HEK293T (cell line): ENCODE measurements at regions of chr15 and their contacts with region 1.

Region 1: DNA sequence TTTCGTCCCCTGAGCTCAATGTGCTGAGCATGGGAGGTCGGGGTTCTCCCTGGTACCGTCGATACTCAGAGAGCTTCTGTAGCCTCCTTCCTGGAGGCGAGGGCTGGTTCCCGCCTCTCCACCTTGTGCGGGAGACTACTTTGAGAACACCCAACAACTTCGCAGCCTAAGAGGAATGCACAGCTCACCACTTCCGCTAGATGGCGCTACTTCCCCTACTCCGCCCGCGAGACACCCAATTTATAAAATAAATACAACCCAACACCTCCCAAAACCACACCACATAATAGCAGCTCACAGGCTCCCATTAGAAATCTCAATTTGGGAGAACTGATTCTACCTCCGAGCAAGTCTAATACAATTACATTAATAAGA is 1.2 kb downstream of the RGMA start:
- DNase-seq: peak; percentile 81

Region 2: DNA sequence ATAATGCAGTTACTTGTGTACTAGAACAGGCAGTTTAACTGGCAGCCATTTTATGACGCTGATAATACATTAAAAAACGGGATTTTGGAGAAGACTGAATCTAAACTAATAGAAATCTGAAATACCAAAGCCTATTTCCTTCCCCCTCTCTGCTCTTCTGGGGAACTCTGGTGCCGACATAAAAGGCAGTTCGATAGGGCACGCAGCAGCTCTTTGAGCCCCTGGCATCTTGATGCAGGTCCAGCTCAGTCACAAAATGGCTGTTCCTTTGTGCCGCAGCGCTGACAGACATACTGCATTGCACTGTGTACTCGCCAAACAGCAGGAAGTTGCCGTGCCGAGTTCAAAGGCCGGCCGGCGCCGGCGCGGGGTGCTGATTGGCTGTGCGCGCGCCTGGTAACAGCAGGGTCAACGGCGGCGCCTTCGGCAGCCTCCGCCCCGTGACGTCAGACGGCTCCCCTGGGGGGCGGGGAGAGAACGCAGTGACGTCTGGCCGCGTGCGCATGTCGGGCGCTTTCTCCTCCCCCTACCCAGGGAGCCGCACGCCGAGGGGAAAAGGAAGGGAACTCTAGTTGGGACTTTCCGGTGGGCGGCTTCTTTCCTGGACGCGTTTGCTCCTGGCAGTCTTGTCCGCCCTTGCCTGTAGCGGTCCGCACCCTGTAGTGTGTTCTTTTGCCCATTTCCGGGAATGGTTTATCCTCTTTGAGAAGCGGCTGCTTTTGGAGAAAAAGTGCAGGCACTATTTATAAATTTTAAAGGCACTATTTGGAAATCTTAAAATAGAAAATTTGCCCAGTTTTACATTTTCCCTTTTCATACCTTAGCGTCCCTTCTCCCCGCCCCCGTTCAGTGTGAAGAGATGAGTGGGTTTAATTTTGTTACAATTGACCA is 183.6 kb before region 1 on chr15:
- CTCF ChIA-PET with region 1: no interaction called
- POLR2A ChIA-PET with region 1: no interaction called
- DNase-seq: peak; percentile 92

Region 3: GRCh38 chr15:93030430-93031105 is 57.2 kb before region 1 on chr15:
- CTCF ChIA-PET with region 1: interaction called, 11 read pairs
- POLR2A ChIA-PET with region 1: no interaction called
- DNase-seq: peak; percentile 85

Region 4: GRCh38 chr15:93063262-93063671 is 24.5 kb before region 1 on chr15:
- CTCF ChIA-PET with region 1: interaction called, 13 read pairs
- POLR2A ChIA-PET with region 1: no interaction called
- DNase-seq: no peak

Region 5: DNA sequence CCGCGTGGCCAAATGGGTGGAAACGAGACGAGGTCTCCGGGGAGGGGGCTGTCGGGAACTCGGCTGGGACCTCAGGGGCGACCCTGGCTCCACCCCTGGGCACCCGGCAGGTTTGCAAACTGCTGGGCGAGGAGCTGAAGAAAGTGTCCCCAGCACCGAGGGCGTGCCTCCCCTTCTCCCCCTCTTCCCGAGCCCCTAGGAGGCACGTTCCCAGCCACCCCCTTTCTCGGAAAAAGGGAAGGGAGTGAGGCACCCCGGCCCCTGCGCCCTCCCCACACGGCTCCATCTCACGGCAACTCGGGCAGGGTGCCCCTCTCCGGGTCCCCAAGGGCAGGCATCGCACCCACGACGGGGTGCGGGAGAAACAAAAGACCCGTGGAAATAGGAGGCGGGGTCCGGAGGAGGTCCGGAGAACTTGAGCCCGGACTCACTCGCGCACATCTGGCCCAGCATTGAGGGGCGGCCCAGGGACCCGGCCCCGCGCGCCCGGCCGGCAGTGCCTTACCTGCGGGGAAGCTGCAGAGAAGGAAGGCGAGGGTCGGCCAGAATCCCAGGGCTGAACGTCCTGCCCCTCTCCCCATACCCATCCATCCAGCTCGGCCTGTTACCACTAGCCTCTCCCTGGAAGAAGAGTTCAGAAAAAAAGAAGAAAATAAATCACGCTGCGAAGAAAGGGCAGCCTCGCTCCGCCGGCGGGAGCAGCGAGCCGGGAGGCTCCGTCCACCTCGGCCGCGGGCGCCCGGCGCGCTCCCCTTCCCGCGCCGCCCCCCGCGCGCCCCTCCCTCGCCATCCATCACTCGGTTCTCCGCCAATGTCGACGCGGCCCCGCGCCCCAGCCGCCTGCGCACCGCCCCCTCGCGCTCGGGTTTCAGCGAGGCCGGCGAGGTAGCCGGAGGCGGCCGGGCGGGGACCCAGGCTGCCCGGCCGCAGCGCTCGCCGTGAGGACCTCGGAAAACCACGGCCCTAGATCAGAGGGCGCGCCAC is 15.1 kb before region 1 on chr15:
- CTCF ChIA-PET with region 1: interaction called, 44 read pairs
- POLR2A ChIA-PET with region 1: interaction called, 12 read pairs
- DNase-seq: peak; percentile 87

Region 6: DNA sequence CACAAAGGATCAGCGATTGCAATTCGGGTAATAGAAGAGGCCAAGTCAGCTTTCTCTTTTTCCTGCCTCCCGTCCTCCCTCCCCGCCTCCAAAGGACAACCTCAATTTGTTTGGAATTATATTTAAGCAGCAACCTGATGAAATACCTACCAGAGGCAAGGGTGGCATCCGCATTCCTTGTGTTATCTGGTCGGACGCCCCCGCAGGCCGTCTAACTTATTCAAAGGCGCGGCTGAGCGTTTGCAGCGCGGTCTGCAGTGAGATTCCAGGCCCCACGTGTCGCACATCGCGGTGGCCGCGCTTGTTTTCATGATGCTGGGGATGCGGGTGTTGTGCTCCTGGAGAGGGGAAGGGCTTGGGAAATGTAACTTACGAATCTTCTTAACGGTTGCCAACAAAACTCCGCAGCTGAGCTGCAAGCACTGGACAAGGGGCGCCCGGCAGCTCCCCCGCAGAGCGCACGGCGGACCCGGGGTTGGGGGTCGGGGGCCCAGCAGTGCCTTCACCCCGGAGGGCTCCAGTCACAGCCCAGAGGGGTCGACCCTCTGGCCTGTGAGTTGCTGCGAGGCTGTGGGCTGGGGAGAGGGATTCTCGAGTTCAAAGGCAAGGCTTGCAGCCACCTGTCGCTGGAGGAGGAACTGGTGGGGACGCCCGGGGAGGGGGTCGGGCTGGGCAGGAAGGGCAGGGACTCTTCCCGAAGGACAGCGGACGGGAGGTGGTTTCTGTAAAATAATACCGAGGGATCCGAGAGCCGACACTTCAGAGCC is 21.7 kb after region 1 on chr15:
- CTCF ChIA-PET with region 1: no interaction called
- POLR2A ChIA-PET with region 1: no interaction called
- DNase-seq: no peak

Region 7: GRCh38 chr15:93126599-93126998 is 38.8 kb after region 1 on chr15:
- CTCF ChIA-PET with region 1: interaction called, 10 read pairs
- POLR2A ChIA-PET with region 1: no interaction called
- DNase-seq: no peak

Region 8: GRCh38 chr15:93179072-93179471 is 91.3 kb after region 1 on chr15:
- CTCF ChIA-PET with region 1: interaction called, 10 read pairs
- POLR2A ChIA-PET with region 1: no interaction called
- DNase-seq: no peak